Right cardiac atrium (tissue), 5 donors: ENCODE measurements at regions of chr9 and their contacts with region 1.

Region 1: GRCh38 chr9:34437006-34437925 is 21.1 kb downstream of the FAM219A start:
- DNase-seq: peak in 2 of 3 donors; percentile 20 to 66
- ATAC-seq: peak; percentile 76 to 78
- H3K4me3 ChIP-seq: no peak overlapping the region
- H3K27ac ChIP-seq: no peak overlapping the region
- H3K4me1 ChIP-seq: peaks cover 6% of the 10 kb centered on the region
- H3K27me3 ChIP-seq: no peaks in the 10 kb centered on the region

Region 2: DNA sequence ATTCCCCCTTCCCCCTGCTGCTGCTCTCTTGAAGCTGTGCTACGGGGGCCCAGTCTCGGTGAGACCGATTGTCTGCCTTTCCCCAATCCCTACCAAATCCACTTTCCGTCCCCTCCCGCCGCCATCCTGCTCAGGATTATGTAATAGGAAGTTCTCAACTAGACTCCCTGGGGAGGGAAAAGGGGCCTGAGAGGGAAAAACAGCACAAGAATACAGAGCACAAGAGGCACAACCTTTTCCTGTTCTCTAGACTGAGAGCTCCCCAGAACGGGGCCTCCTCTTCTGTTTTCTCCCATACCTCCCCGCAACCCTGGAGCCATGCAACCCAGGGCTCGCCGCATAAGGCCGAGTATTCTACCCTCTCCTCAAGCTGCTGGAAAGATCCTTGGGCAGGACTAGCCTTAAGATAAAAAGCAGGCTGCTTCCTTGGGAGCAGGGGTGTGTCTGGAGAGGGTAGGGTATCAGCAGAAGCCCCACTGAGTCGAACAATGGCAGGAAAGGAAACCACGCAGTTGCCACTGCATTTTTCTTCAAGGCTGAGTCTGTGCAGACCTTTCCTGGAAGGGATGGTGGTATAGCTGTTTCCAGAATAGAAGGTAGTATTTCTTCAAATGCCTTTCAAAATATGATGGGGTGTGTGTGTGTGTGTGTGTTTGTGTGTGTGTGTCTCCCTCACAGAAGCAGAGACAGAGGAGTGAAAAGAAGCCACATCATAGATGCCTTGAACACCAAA is 73.5 kb before region 1 on chr9:
- intact Hi-C with region 1: no loop called
- DNase-seq: peak; percentile 43 to 81 (median 69)
- ATAC-seq: peak; percentile 81 to 94
- H3K4me3 ChIP-seq: peak overlapping the region; percentile 1
- H3K27ac ChIP-seq: peak overlapping the region; percentile 87
- H3K4me1 ChIP-seq: peaks cover 5% of the 10 kb centered on the region
- H3K27me3 ChIP-seq: no peaks in the 10 kb centered on the region

Region 3: DNA sequence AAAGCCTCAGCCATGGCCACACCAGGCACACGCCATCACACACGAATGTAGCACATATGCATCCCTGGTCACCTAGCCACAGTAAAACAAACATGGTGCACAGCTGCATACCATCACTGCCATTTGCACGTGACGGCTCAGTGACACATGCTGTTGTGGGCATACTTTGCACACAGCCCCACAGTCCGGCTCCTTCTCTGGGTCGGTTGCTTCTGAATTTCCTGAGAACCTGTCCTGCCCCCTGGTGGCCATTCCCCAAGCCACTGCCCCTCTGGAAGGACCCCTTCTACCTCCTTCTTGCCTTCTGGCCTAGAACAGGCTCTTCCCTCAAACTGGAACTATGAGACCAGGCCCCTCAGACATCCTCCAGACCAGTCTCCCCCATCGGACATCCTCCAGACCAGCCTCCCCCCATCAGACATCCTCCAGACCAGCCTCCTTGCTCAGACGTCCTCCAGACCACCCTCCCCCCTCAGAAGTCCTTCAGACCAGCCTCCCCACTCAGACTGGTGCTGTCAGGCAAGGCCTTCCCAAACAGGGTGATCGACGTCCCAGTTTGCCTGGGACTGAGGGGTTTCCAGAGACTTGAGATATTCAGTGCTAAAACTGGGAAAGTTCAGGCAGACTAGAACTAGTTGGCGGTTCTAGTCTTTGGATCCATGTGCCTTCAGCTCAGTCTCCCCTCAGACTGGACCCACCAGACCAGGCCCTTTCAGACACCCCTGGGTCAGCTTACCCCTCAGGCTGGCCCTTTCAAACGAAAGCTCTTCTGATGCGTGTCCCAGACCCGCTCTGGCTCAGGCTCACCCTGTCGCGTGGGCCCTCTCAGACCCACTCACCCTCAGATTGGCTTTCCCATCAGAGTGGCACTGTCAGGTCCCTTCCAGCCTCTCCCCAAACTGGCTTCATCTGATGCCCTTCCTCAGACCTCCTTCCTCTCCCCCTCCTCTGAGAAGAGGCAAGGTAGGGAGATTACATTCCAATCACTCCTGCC is 109.9 kb after region 1 on chr9:
- intact Hi-C with region 1: loop called in 1 of 4 experiments (anchors 10 kb)
- DNase-seq: peak; percentile 75 to 88 (median 82)
- ATAC-seq: peak; percentile 59 to 73
- H3K4me3 ChIP-seq: no peak overlapping the region
- H3K27ac ChIP-seq: no peak overlapping the region
- H3K4me1 ChIP-seq: no peaks in the 10 kb centered on the region
- H3K27me3 ChIP-seq: no peaks in the 10 kb centered on the region